ENCODE measurements at regions of chr12 and their contacts with region 1.

Region 1: DNA sequence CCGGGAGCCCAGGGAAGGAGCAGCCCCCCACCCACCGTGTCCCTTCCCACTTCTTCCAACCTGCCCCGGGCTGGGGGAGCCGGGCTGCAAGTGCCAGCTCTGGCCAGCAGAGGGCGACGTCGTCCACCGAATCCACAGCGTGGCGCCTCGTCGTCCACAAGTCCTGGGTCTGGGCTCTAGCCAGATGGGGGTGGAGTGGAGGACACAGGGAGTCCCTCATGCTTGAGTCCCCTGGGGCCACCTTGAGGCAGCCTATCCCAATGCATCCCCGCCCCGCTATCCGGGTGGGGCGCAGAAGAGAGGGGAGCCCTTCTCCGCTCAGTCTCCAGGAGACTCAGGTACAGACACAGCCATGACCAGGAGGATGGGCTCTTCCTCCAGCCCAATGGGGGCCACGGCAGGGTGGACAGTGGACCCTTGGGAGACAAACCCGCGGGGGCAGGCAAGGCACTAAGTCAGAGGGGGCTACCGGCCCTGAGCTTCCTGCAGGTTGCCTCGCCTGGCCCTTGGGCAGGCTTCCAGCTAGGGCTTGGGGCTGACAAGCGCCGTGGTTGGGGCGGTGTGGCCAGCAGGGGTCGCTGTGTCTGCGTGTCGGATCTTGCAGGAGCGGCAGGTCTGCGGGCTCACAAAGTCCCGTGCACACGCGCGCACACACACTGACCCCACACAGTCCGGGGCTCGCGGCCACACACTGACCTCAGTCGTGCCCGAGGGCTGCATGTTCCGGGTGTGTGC is 5.5 kb downstream of the AQP5 start:
- DNase-seq: peak; percentile 83
- H3K4me3 Mint-ChIP-seq: peak overlapping the region; percentile 67
- H3K27ac Mint-ChIP-seq: peak overlapping the region; percentile 69
- H3K4me1 Mint-ChIP-seq: no peaks in the 10 kb centered on the region
- H3K27me3 Mint-ChIP-seq: peaks cover 34% of the 10 kb centered on the region

Region 2: DNA sequence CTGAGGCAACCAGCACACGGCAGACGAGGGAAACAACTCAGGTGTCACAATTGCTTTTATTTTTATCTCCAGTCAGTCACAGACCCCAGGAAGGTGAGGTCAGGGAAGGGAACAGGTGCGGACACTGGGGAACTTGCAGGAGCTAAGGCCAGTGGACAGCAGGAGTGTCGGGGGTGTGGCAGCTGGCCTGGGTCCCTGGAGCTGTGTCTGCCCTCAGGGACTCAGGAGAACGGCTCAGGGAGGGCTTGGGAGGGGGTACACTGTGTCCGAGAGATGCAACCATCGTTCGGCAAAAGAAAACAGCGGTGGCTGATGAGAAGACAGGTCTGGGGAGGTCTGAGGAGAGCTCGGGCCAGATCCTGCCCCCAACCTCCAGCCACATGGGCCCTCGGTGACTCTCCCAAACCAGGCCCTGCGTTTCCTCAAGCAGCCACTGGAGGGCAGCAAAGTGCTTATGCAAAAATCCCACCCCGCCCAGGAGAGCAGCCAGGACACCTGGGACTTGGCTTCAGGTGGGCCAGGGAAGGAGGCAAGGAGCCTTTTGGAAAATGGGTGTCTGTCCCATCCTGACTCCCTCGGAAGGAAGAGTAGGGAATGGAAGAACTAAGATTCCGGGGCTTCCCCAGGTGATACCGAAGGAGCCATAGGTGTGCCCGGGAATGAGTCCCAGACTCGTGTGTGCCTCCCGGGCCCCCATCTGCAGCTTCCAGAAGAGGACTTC is 100.2 kb before region 1 on chr12:
- intact Hi-C with region 1: loop called (anchors 1 kb)
- DNase-seq: peak; percentile 65
- H3K4me3 Mint-ChIP-seq: no peak overlapping the region
- H3K27ac Mint-ChIP-seq: no peak overlapping the region
- H3K4me1 Mint-ChIP-seq: no peaks in the 10 kb centered on the region
- H3K27me3 Mint-ChIP-seq: peaks cover 7% of the 10 kb centered on the region

Region 3: DNA sequence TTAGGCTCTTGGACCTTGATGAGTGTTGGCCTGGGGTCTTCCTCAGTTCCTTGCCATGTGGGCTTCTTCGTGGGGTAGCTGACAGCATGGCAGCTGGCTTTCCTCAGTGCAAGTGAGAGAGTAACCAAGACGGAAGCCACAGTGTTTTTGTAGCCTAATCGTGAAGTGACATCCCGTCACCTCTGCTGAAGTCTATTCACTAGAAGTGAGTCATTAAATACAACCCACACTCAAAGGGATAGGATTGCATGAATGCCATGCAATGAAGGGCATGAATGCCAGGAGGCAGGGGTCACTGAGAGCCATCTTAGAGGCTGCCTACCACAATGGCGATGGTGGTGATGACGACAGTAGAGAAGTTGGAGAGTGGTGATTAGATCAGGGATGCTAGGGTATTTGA is 76.6 kb after region 1 on chr12:
- intact Hi-C with region 1: loop called (anchors 1 kb)
- DNase-seq: no peak
- H3K4me3 Mint-ChIP-seq: no peak overlapping the region
- H3K27ac Mint-ChIP-seq: no peak overlapping the region
- H3K4me1 Mint-ChIP-seq: peaks cover 37% of the 10 kb centered on the region
- H3K27me3 Mint-ChIP-seq: peaks cover 11% of the 10 kb centered on the region

Region 4: GRCh38 chr12:50074936-50075807 is 108.0 kb after region 1 on chr12:
- intact Hi-C with region 1: loop called (anchors 1 kb)
- DNase-seq: peak; percentile 69
- H3K4me3 Mint-ChIP-seq: no peak overlapping the region
- H3K27ac Mint-ChIP-seq: no peak overlapping the region
- H3K4me1 Mint-ChIP-seq: peaks cover 13% of the 10 kb centered on the region
- H3K27me3 Mint-ChIP-seq: peaks cover 8% of the 10 kb centered on the region